ENCODE measurements at regions of chr20 and their contacts with region 1.

Region 1: DNA sequence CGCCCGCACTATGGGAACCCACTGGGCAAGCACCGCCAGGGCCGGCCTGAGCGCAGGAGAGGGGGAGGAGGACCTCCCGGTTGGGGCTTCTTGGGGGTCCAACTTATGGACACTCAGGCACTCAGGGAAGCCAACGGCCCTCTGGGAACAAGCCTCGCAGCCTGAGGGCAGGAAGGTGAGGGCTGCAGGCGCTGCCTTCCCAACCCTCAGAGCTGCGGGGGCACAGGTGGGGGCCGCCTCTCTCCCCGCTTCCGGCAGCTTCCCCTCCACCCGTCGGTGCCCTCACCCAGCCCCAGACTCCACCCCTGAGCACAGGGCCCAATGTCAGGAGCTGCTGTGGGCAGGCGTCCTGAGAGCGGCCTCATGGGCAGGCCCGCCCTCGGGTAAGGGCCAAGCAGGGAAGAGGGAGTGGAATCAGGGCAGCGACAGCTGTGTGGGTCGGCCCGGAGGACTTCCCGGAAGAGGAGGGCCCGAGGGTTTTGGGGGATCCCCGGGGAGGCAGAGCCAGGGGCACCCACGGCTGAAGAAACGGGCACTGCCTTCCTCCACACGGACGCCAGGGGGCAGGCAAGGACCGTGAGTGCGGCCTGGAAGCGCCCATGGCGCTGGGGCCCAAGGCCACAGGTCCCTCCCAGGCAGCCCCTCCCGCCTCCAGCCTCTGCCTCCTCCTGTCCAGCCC is 488 bp upstream of the PTK6 start:
- DNase-seq: peak; percentile 84 to 97 (median 92)
- ATAC-seq: peak; percentile 90
- H3K4me3 ChIP-seq: peak overlapping the region; percentile 48 to 53
- H3K4me3 Mint-ChIP-seq: peak overlapping the region; percentile 75
- H3K27ac ChIP-seq: peak overlapping the region; percentile 34 to 84
- H3K27ac Mint-ChIP-seq: peak overlapping the region; percentile 81
- H3K4me1 ChIP-seq: peaks cover 22% of the 10 kb centered on the region
- H3K4me1 Mint-ChIP-seq: peaks cover 14% of the 10 kb centered on the region
- H3K27me3 ChIP-seq: no peaks in the 10 kb centered on the region
- H3K27me3 Mint-ChIP-seq: no peaks in the 10 kb centered on the region
- CTCF ChIP-seq: peak; percentile 91

Region 2: DNA sequence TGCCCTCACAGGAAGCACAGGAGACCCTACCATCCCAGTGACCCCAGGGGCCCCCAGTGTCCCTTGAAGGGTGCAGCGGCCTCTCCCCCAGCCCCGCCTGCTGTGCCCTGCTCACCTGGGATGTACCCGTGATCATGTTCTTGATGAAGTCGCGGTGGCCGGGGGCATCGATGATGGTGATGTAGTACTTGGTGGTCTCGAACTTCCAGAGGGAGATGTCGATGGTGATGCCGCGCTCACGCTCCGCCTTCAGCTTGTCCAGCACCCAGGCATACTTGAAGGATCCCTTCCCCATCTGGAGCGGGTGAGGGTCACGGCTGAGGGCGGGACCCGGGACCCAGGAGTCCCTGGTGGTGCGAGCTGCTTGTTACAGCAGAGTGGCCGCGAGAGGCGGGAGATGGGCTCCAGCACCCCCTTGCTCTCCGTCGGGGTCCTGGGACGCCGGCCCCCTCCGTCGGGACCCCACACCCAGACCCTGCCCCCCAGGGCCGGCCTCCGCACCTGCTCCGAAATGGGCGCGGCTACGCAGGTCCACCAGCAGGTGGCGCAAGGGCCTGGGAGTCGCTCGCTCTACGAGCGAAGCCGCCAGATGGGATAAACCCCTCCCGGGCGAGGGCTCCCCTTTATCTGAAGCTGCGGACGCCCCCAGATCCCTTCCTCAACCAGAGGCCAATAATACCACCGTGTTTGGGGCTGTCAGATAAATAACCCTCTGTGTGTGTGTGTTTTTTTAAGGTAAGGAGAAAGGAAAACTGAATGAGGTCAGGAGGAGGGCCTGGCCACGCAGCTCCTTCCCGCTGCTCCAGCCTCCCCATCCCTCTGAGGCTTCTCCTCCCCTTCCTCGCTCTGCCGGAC is 41.7 kb before region 1 on chr20:
- CTCF ChIA-PET with region 1: interaction called, 14 read pairs
- POLR2A ChIA-PET with region 1: no interaction called
- intact Hi-C with region 1: loop called in 1 of 2 experiments (anchors 1 kb)
- DNase-seq: peak; percentile 48 to 86 (median 78)
- ATAC-seq: peak; percentile 74
- H3K4me3 ChIP-seq: peak overlapping the region; percentile 15 to 18
- H3K4me3 Mint-ChIP-seq: peak overlapping the region; percentile 39
- H3K27ac ChIP-seq: no peak overlapping the region
- H3K27ac Mint-ChIP-seq: no peak overlapping the region
- H3K4me1 ChIP-seq: peaks cover 16% of the 10 kb centered on the region
- H3K4me1 Mint-ChIP-seq: peaks cover 5% of the 10 kb centered on the region
- H3K27me3 ChIP-seq: peaks cover 9 to 33% of the 10 kb centered on the region in 2 experiments
- H3K27me3 Mint-ChIP-seq: peaks cover 10% of the 10 kb centered on the region
- CTCF ChIP-seq: peak; percentile 95

Region 3: DNA sequence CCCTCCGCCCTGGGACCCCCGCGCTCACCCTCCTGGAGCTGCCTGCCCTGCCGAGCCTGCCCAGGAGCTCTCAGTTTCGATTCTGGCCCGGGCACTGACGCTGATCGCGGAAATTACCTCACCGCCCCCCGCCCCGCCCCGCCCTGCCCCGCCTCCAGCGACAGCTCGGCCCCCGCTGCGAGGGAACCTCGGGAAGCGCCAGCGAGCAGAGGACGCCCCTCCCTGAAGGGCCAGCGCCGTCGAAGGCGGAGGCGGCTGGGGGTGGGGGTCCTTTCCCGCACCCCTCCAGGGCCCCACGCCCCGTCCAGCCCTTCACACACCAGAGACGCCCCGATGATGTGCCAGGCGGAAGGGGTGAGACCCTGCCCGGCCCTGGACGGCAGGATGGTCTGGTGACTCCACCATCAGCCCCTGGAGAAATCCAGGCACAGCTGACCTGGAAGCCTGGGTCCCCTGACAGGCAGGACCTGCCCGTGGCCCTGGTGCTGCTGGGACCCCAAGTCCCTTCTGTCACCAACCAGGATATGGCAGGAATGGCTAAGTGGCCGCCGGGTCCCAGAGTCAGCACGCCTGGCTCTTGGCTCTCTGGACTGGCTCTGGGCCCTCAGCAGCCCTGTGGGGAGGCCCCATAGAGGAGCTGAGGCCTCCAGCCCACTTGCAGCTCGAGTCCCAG is 36.6 kb after region 1 on chr20 and contains the start of gene HELZ2:
- CTCF ChIA-PET with region 1: interaction called, 60 read pairs
- POLR2A ChIA-PET with region 1: interaction called, 4 read pairs
- intact Hi-C with region 1: loop called in 1 of 2 experiments (anchors 1 kb)
- DNase-seq: peak; percentile 50 to 87 (median 69)
- ATAC-seq: peak; percentile 90
- H3K4me3 ChIP-seq: peak within 1 kb of the TSS; percentile 50 to 73
- H3K4me3 Mint-ChIP-seq: peak within 1 kb of the TSS; percentile 81
- H3K27ac ChIP-seq: peak within 1 kb of the TSS; percentile 17 to 59
- H3K27ac Mint-ChIP-seq: peak within 1 kb of the TSS; percentile 55
- H3K4me1 ChIP-seq: peaks cover 21% of the 10 kb centered on the region
- H3K4me1 Mint-ChIP-seq: peaks cover 2% of the 10 kb centered on the region
- H3K27me3 ChIP-seq: peaks cover 0 to 3% of the 10 kb centered on the region in 2 experiments
- H3K27me3 Mint-ChIP-seq: no peaks in the 10 kb centered on the region
- CTCF ChIP-seq: no peak
- total RNA-seq, gene HELZ2: 43.3 to 48.0 TPM

Region 4: DNA sequence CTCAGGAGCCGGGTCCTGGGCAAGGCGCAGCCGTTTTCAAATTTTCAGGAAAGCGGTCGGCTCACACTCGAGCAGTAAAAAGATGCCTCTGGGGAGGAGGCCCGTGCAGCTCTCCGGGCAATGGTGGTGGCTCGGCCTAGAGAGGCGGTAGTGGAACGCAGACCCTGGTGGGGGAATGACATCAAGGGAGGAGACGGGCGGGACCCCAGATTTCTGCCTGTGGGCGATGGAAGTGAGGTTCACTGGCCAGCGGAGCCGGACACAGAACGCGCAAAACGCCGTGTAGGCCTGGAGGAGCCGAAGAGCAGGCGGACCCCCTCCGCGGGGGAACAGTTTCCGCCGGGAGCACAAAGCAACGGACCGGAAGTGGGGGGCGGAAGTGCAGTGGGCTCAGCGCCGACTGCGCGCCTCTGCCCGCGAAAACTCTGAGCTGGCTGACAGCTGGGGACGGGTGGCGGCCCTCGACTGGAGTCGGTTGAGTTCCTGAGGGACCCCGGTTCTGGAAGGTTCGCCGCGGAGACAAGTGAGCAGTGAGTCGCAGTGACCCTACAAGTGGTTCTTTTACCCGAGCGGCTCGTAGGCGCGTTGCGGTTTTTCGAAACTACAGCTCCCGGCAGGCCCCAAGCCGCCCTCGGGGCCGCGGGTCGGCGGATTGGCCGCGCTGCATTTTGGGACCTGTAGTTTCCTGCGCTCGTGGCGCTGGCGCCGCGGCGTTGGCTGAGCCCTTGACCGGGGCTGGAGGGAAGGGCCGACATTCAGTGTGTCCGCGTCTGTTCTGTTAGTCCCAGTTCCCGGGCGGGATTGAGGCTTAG is 120.5 kb after region 1 on chr20 and contains the start of gene RTEL1:
- CTCF ChIA-PET with region 1: interaction called, 11 read pairs
- POLR2A ChIA-PET with region 1: interaction called, 8 read pairs
- intact Hi-C with region 1: loop called in 1 of 2 experiments (anchors 1 kb)
- DNase-seq: peak; percentile 81 to 97 (median 88)
- ATAC-seq: peak; percentile 83
- H3K4me3 ChIP-seq: peak within 1 kb of the TSS; percentile 76 to 97
- H3K4me3 Mint-ChIP-seq: peak within 1 kb of the TSS; percentile 93
- H3K27ac ChIP-seq: peak within 1 kb of the TSS; percentile 72 to 75
- H3K27ac Mint-ChIP-seq: peak within 1 kb of the TSS; percentile 91
- H3K4me1 ChIP-seq: peaks cover 35% of the 10 kb centered on the region
- H3K4me1 Mint-ChIP-seq: peaks cover 36% of the 10 kb centered on the region
- H3K27me3 ChIP-seq: no peaks in the 10 kb centered on the region
- H3K27me3 Mint-ChIP-seq: no peaks in the 10 kb centered on the region
- CTCF ChIP-seq: no peak
- total RNA-seq, gene RTEL1: 21.4 to 24.9 TPM

Region 5: GRCh38 chr20:63791497-63792156 is 254.0 kb after region 1 on chr20:
- CTCF ChIA-PET with region 1: interaction called, 5 read pairs
- POLR2A ChIA-PET with region 1: no interaction called
- intact Hi-C with region 1: loop called in 1 of 2 experiments (anchors 1 kb)
- DNase-seq: no peak
- ATAC-seq: no peak
- H3K4me3 ChIP-seq: no peak overlapping the region
- H3K4me3 Mint-ChIP-seq: no peak overlapping the region
- H3K27ac ChIP-seq: no peak overlapping the region
- H3K27ac Mint-ChIP-seq: no peak overlapping the region
- H3K4me1 ChIP-seq: no peaks in the 10 kb centered on the region
- H3K4me1 Mint-ChIP-seq: peaks cover 6% of the 10 kb centered on the region
- H3K27me3 ChIP-seq: no peaks in the 10 kb centered on the region
- H3K27me3 Mint-ChIP-seq: peaks cover 8% of the 10 kb centered on the region
- CTCF ChIP-seq: no peak

Region 6: GRCh38 chr20:64038565-64039292 is 501.1 kb after region 1 on chr20:
- CTCF ChIA-PET with region 1: interaction called, 14 read pairs
- POLR2A ChIA-PET with region 1: no interaction called
- intact Hi-C with region 1: no loop called
- DNase-seq: peak; percentile 57 to 91 (median 78)
- ATAC-seq: peak; percentile 78
- H3K4me3 ChIP-seq: peak overlapping the region; percentile 45 to 76
- H3K4me3 Mint-ChIP-seq: peak overlapping the region; percentile 78
- H3K27ac ChIP-seq: peak overlapping the region in 1 of 2 experiments; percentile 45
- H3K27ac Mint-ChIP-seq: no peak overlapping the region
- H3K4me1 ChIP-seq: peaks cover 75% of the 10 kb centered on the region
- H3K4me1 Mint-ChIP-seq: peaks cover 39% of the 10 kb centered on the region
- H3K27me3 ChIP-seq: peaks cover 0 to 3% of the 10 kb centered on the region in 2 experiments
- H3K27me3 Mint-ChIP-seq: no peaks in the 10 kb centered on the region
- CTCF ChIP-seq: peak; percentile 67

Measured in CD8-positive, alpha-beta T cell (primary cell).